Left cardiac atrium (tissue), 4 donors: ENCODE measurements at regions of chr14 and their contacts with region 1.

Region 1: DNA sequence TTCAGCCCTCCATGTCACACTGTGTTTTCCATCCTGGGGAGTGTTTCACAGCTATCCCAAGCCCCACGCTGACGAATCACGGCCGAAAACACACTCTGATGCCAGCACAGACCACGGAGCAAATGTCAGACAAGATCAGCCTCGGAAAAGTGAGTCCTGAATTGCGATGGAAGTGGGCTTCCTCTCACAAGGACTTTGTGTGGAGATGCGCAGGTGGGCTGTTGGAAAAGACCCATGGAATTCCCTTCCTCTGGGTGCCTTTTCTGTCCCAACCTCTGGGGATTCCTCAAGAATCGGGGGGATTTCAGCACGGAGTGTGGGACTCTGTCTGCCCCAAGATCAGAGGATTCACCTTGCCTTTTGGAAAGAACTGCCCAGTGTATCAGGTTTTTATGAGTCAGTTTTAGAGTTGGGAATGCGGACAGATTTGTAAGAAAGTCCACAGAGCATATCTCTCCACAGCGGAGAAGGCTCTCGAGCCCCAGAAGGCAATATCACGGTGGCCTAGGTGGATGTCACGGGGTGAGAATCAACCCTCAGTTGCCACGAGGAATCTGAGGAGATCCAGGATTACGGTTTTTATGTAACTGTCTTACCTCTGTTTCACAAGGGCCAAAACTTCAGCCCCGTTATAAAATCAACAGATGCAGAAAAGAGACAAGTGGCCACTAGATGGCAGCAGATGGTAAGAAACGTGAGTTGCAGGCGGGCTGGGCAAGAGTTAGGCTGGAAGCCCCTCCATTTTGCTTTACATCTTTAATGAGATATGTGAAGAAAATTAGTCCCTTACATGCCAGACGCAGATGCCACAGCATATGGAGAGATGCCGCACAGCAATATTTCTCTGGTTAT is 201.9 kb downstream of the DAD1 start:
- DNase-seq: peak; percentile 66
- ATAC-seq: peak; percentile 52 to 60

Region 2: DNA sequence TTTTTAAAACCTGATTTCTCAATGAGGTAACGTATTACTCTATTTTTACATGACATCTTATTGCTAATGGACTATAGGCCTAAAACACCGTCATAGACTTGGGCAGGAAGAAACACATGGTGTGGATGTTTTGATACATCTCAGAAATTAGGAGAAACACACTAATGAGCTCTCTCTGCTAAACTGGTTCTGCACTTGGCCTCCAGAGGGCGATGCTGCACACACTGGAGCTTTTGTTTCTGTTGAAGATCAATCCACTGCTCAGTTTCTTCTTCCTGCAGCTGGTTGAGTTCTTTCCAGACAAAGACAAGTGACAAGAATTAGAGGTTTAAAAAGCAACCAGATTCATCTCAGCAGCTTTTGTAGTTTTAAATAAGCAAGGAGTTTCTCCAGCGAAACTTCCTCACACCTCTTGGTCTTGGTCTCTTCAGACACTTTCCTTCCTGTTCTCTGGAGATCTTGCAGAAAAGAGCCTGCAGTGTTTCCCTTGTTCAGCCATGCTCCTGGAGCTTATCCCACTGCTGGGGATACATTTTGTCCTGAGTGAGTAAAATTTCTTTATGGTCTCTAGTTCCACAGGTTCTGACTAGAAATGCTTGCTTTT is 535.0 kb before region 1 on chr14:
- intact Hi-C with region 1: no loop called
- DNase-seq: peak; percentile 31
- ATAC-seq: no peak

Region 3: DNA sequence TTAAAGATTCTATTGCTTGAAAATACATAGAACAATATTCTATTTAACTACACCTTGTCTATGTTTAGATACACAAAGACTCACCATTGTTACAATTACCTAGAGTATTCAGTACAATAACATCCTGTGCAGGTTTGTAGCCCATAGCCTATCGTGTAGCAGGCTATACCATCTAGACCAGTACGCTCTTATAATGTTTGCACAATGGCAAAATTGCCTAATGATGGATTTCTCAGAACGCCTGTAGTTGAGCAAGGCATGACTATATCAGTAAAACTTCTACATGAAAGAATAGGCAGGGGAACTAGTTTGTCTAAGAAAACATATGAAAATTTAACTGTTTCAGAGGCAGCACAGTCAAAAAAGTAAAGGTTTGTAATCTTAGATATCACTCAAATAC is 174.0 kb before region 1 on chr14:
- intact Hi-C with region 1: no loop called
- DNase-seq: no peak
- ATAC-seq: no peak

Region 4: GRCh38 chr14:22472935-22473854 is 86.0 kb after region 1 on chr14:
- intact Hi-C with region 1: loop called (anchors 2 to 5 kb)
- DNase-seq: no peak
- ATAC-seq: peak; percentile 36 to 60

Region 5: DNA sequence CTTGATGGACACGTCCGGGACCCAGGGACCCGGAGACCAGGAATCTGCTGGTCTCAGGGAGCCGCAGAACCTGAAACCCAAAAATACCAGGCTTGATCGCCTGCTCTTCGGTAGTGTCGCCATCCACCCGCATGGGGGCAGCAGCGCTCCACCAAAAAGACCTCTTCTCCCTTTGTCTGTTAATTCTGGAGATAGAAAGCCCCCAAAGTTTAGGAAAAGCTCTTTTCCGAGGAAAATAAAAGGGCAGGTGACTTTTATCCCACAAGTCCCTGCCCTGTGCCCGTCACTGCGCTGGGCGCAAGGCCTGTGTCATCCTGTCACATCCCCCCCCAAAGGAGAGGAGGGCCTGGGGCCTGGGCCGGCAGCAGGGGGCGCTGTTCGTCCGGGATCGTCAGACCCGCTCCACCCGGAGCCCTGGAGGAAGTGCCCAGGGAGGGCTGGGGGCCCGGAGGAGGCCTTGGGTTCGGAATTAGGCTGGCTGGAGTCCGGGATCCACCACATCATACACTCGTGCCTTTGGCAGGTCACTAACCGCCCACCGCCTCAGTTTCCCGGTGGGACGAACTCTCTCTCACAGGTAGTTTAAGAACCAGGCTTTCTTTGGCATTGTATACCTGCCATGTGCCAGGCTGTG is 170.0 kb after region 1 on chr14:
- intact Hi-C with region 1: loop called (anchors 1 to 5 kb)
- DNase-seq: peak; percentile 87
- ATAC-seq: peak; percentile 83 to 86

Region 6: DNA sequence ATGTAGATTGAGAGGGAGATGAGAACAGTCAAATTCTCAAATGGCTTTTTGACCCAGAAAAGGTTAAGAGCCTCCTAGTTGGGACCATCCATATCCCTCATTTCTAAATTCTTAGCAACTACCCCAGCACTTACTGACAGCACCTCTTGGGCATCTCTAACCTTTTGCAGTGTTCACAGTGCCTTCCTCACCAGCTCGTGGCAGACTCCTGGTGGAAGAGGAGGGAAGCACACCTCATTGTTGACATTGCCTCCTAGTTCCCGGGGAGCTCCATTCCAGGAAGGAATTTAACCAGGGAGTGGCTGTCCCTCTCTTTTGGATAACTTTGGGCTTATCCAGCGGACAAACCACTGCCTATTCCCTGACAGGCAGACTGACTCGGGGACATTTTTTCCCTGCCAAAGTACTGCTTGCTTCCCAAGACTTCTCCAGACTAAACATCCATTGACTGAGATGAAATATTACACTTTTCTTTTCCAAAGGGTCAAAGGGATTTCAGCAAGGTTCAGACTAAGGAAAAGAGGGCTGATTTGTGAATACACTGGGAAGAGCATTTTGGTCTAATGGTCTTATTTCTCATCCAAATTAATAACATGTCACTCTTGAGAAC is 266.0 kb after region 1 on chr14:
- intact Hi-C with region 1: loop called (anchors 2 to 5 kb)
- DNase-seq: peak; percentile 48
- ATAC-seq: peak; percentile 78 to 92

Region 7: DNA sequence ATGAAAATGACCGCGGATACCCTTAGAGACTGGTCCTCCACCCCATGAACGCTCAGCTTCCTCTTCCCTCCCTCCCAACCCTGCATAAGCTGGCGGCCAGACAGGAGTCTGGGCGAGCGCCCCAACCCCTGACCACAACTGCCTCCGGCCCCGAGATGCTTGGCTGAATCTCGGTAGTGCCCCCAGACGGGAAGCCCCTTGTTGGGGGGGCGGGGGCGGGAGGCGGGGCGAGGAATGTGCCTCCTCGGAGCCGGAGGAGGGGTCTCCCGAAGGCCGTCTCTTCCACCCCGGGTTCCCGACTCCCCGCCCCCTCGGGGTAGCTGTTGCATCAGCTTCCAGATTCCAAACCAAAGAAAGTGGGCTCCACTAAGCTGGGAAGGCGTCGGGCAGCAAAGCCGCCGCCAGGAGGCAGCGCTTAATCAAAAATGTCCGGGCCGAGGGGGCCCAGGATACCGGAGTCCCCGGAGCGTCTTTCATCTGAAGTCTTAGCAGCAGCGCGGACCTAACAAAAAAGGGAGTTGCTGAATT is 435.5 kb after region 1 on chr14:
- intact Hi-C with region 1: loop called in 1 of 2 experiments (anchors 10 kb)
- DNase-seq: peak; percentile 83
- ATAC-seq: peak; percentile 83 to 88

Region 8: GRCh38 chr14:22852940-22853767 is 466.0 kb after region 1 on chr14:
- intact Hi-C with region 1: loop called (anchors 5 kb)
- DNase-seq: peak; percentile 89
- ATAC-seq: peak; percentile 50 to 56